K562 (cell line): ENCODE measurements at regions of chr7 and their contacts with region 1.

Region 1: DNA sequence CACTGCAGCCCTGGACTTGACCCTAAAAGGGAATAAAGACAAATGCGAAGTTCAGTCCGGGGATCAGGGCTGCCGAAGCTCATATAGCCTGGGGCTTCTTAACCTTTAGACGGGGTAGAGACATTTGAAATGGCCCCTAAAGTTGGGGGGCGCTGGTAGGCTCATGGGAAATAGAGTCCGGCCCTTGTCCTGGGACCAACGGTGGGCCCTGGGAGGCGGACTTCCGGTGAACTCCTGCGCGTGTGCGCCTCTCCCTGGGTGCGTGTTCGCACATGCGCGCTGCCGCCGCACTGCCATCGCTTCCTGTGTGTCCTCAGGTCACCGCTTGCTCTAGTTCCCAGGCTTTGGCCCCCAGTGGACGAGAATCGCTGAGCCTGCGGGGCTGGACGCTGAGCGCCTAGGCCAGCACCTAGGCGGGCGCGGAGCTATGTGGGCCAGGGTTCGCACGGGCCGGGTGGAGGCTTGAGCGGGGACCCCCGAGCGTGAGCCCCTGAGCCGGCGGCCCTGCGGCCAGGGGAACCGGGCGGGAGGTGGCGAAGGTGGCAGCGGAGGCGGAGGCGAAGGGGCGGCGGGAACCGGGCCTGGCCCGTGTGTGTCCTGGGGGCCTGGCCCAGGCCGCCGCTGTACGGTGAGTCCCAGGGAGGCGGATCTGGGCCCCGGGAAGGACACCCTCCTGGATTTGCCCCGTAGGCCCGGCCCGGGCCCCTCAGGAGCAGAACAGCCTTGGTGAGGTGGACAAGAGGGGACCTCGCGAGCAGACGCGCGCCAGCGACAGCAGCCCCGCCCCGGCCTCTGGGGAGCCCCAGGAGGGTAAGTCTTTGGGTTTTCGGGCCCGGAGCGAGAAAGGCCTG is 23.0 kb upstream of the ZNF12 start:
- DNase-seq: peak; percentile 92 to 97 (median 94)
- ATAC-seq: peak; percentile 99
- H3K4me3 ChIP-seq: peak overlapping the region; percentile 84
- H3K27ac ChIP-seq: peak overlapping the region; percentile 77
- H3K4me1 ChIP-seq: peaks cover 0 to 14% of the 10 kb centered on the region in 2 experiments; a peak in 3 of 5 replicates
- H3K27me3 ChIP-seq: no peaks in the 10 kb centered on the region; a peak in 1 of 5 replicates
- CTCF ChIP-seq: no peak; a peak in 1 of 6 replicates
- EP300 ChIP-seq: no peak
- POLR2A ChIP-seq: peak; percentile 82
- RAD21 ChIP-seq: no peak

Region 2: DNA sequence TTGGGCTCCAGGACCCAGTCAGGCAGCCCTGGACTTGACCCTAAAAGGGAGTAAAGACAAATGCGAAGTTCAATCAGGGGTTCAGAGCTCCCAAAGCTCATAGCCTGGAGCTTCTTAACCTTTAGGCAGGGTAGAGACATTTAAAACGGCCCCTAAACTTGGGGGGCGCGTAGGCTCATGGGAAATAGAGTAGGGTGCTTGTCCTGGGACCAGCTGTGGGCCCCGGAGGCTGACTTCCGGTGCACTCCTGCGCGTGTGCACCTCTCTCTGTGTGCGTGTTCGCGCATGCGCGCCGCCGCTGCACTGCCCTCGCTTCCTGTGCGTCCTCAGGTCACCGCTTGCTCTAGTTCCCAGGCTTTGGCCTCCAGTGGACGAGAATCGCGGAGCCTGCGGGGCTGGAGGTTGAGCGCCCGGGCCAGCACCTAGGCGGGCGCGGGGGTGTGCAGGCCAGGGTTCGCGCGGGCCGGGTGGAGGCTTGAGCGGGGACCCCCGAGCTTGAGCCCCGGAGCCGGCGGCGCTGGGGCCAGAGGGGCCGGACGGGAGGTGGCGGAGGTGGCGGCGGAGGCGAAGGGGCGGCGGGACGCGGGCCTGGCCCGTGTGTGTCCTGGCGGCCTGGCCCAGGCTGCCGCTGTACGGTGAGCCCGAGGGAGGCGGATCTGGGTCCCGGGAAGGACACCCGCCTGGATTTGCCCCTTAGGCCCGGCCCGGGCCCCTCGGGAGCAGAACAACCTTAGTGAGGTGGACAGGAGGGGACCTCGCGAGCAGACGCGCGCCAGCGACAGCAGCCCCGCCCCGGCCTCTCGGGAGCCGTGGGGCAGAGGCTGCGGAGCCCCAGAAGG is 1683.9 kb before region 1 on chr7 and contains the start of gene RBAK:
- CTCF ChIA-PET with region 1: no interaction called
- POLR2A ChIA-PET with region 1: no interaction called
- in situ Hi-C with region 1: loop called (anchors 5 kb)
- intact Hi-C with region 1: no loop called
- DNase-seq: peak; percentile 91 to 98 (median 92)
- ATAC-seq: peak; percentile 100
- H3K4me3 ChIP-seq: peak within 1 kb of the TSS; percentile 93
- H3K27ac ChIP-seq: peak within 1 kb of the TSS; percentile 79
- H3K4me1 ChIP-seq: peaks cover 0 to 12% of the 10 kb centered on the region in 2 experiments; a peak in 3 of 5 replicates
- H3K27me3 ChIP-seq: no peaks in the 10 kb centered on the region
- CTCF ChIP-seq: no peak
- EP300 ChIP-seq: no peak
- POLR2A ChIP-seq: peak; percentile 82
- RAD21 ChIP-seq: no peak
- polyA plus RNA-seq, gene RBAK: 2.7 to 3.3 TPM

Region 3: DNA sequence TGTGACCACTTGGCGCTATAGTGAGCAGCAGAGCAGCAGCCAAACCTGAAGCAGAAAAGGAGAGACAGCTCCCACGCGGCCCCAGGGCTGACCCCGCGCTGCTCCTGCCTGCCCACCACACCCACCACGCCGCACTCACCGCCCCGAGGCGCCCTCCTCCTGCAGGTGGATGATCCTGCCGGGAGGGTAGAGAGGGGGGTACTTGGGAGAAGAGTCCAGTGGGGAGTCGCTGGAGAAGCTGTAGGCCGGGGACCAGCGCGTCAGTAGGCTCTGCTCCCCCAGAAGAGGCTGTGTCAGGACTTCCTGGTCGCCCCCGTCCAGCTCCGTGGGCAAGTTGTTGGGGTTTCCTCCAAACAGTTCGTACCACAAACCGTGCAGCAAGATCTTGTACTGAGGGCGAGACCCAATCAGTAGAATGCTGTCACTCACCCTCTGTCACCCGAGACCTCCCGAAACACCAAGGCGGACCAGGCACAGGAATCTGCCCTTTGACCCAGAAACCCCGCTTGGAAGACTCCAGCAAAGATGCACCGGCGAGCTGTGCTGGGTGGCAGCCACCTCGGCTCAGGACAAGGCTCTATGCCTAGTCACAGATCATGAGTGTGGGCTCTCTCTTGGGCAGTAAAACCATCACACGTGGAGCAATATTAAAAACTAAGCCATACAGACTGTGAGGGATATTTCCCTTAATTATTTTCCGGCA is 319.6 kb before region 1 on chr7:
- CTCF ChIA-PET with region 1: no interaction called
- POLR2A ChIA-PET with region 1: no interaction called
- in situ Hi-C with region 1: no loop called
- intact Hi-C with region 1: no loop called
- DNase-seq: peak in 1 of 4 experiments; percentile 27
- ATAC-seq: no peak
- H3K4me3 ChIP-seq: no peak overlapping the region
- H3K27ac ChIP-seq: no peak overlapping the region
- H3K4me1 ChIP-seq: peaks cover 0 to 6% of the 10 kb centered on the region in 2 experiments; a peak in 1 of 5 replicates
- H3K27me3 ChIP-seq: no peaks in the 10 kb centered on the region
- CTCF ChIP-seq: no peak
- EP300 ChIP-seq: no peak
- POLR2A ChIP-seq: 0 out of 2 replicates have a peak, but pooled peaks have one; percentile 23
- RAD21 ChIP-seq: no peak

Region 4: DNA sequence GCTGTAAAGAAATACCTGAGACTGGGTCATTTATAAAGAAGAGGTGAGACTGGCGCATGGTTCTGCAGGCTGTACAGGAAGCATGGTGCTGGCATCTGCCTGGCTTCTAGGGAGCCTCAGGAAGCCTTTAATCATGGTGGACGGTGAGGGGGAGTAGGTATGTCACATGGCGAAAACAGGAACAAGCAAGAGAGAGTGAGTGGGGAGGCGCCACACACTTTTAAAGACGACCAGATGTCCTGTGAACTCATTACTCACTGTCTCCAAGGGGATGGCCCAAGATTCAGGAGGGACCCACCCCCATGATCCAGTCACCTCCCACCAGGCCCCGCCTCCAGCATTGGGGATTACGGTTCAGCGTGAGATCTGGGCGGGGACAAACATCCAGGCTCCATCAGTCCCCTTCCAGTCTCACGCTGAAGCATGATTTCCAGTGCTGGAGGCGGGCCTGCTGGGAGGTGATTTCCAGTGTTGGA is 89.4 kb before region 1 on chr7:
- CTCF ChIA-PET with region 1: no interaction called
- POLR2A ChIA-PET with region 1: no interaction called
- in situ Hi-C with region 1: no loop called
- intact Hi-C with region 1: no loop called
- DNase-seq: peak; percentile 66 to 91 (median 76)
- ATAC-seq: peak; percentile 89
- H3K4me3 ChIP-seq: no peak overlapping the region
- H3K27ac ChIP-seq: peak overlapping the region; percentile 83
- H3K4me1 ChIP-seq: peaks cover 19 to 64% of the 10 kb centered on the region in 2 experiments; a peak in 4 of 5 replicates
- H3K27me3 ChIP-seq: no peaks in the 10 kb centered on the region
- CTCF ChIP-seq: no peak
- EP300 ChIP-seq: no peak
- POLR2A ChIP-seq: no peak
- RAD21 ChIP-seq: no peak